SK-N-SH (cell line): ENCODE measurements at regions of chr10 and their contacts with region 1.

Region 1: DNA sequence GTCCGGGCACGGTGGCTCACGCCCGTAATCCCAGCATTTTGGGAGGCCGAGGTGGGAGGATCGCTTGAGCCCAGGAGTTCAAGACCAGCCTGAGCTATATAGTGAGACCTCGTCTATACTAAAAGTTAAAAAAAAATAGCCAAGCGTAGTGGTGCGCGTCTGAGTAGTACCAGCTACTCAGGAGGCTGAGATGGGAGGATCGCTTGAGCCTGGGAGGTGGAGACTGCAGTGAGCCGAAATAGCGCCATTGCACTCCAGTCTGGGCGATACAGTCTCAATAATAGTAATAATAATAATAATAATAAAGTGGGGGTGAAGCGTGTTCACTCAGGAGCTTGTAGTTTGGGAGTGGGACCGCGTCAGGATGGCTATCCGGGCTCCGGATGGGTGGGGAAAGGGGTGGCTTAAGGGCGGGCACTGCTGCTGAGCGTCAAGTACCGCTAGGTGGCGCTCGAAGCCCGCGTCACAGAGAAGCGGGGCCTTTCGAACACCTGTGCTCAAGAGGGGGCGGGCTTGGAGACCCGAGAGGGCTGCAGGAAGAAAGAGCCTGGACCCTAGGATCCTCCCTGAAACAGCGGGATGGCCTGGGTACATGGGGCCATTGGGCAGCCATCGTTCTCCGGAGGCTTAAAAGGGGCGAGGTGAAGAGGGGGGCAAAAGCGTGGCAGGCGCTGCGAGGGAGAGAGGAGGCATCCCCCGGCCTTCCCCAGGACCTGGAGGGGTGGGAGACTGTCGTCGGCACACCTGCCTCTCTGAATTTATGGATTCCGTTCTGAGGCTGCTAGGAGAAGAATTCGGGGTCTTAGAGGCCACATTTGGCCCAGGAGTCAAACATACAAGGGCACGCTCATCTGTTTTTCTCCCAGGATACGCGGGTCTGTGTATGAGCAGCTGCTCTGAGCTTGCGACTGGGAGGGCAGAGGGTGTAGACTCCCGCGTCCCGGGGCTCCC is 14.5 kb downstream of the LBX1 start:
- DNase-seq: peak; percentile 84
- H3K4me3 ChIP-seq: peak overlapping the region; percentile 19 to 67; a peak in 3 of 4 replicates
- H3K27ac ChIP-seq: no peak overlapping the region
- H3K4me1 ChIP-seq: peaks cover 0 to 35% of the 10 kb centered on the region in 2 experiments; a peak in 2 of 4 replicates
- H3K27me3 ChIP-seq: peaks cover 86% of the 10 kb centered on the region
- CTCF ChIP-seq: peak; percentile 93
- EP300 ChIP-seq: no peak
- RAD21 ChIP-seq: peak; percentile 77

Region 2: GRCh38 chr10:100890673-100891317 is 323.9 kb before region 1 on chr10:
- CTCF ChIA-PET with region 1: no interaction called
- POLR2A ChIA-PET with region 1: no interaction called
- DNase-seq: no peak
- H3K4me3 ChIP-seq: no peak overlapping the region
- H3K27ac ChIP-seq: peak overlapping the region; percentile 56 to 85; a peak in 3 of 4 replicates
- H3K4me1 ChIP-seq: peaks cover 0 to 11% of the 10 kb centered on the region in 2 experiments; a peak in 3 of 4 replicates
- H3K27me3 ChIP-seq: no peaks in the 10 kb centered on the region
- CTCF ChIP-seq: no peak
- EP300 ChIP-seq: peak; percentile 59 to 86; a peak in 3 of 4 replicates
- RAD21 ChIP-seq: no peak

Region 3: DNA sequence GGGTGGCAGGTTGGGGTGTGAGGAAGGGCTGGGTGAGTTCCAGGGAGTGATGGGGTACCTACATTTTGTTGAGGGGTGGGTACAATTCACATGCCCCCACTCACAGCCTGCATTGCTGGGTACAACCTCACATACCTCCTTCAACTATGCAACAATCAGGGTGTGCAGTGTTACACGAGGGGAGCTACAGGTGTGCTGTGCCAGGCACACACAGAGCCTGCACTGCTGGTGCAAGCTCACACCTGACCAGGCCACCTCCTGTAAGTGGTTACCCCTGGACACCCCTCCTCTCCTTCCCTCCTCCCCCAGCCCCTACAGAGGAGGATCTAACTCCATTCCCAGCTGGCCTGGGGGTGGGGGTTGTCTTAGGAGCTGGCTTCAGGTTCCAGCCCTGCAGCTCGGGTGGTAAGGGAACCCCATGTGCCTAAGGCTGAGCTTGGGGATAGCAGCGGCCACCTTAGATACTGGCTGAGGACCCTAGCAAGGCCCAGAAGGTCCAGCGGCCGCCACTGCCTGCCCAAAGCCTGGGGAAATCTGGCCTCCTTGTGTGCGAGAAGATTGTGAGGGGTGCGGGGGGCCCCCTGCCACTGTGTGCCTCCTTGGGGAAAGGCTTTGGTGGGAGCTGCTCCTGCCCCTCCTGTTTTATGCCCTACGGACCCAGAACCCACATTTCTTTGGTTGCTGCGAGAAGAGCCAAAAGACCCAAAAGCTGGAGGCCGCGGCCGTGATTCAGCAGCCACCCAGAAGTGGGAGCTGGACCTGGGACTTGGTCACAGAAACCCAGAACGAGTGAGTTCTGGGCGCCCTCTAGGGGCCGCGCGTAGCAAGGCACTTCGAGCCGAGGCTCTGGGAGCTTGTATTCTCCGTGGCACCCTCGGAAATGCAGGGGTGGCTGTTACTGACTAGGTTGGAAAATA is 72.8 kb before region 1 on chr10:
- CTCF ChIA-PET with region 1: interaction called, 15 read pairs
- POLR2A ChIA-PET with region 1: no interaction called
- DNase-seq: peak; percentile 92
- H3K4me3 ChIP-seq: peak overlapping the region in 1 of 2 experiments; percentile 41; a peak in 1 of 4 replicates
- H3K27ac ChIP-seq: no peak overlapping the region
- H3K4me1 ChIP-seq: peaks cover 0 to 3% of the 10 kb centered on the region in 2 experiments; a peak in 1 of 4 replicates
- H3K27me3 ChIP-seq: peaks cover 26% of the 10 kb centered on the region
- CTCF ChIP-seq: peak; percentile 98
- EP300 ChIP-seq: no peak
- RAD21 ChIP-seq: peak; percentile 95

Region 4: GRCh38 chr10:101228153-101228973 is 13.6 kb after region 1 on chr10:
- CTCF ChIA-PET with region 1: interaction called, 128 read pairs
- POLR2A ChIA-PET with region 1: no interaction called
- DNase-seq: peak; percentile 76
- H3K4me3 ChIP-seq: no peak overlapping the region; a peak in 1 of 4 replicates
- H3K27ac ChIP-seq: no peak overlapping the region
- H3K4me1 ChIP-seq: peaks cover 0 to 8% of the 10 kb centered on the region in 2 experiments; a peak in 1 of 4 replicates
- H3K27me3 ChIP-seq: peaks cover 96% of the 10 kb centered on the region
- CTCF ChIP-seq: 0 out of 2 replicates have a peak, but pooled peaks have one; percentile 10
- EP300 ChIP-seq: no peak
- RAD21 ChIP-seq: no peak

Region 5: DNA sequence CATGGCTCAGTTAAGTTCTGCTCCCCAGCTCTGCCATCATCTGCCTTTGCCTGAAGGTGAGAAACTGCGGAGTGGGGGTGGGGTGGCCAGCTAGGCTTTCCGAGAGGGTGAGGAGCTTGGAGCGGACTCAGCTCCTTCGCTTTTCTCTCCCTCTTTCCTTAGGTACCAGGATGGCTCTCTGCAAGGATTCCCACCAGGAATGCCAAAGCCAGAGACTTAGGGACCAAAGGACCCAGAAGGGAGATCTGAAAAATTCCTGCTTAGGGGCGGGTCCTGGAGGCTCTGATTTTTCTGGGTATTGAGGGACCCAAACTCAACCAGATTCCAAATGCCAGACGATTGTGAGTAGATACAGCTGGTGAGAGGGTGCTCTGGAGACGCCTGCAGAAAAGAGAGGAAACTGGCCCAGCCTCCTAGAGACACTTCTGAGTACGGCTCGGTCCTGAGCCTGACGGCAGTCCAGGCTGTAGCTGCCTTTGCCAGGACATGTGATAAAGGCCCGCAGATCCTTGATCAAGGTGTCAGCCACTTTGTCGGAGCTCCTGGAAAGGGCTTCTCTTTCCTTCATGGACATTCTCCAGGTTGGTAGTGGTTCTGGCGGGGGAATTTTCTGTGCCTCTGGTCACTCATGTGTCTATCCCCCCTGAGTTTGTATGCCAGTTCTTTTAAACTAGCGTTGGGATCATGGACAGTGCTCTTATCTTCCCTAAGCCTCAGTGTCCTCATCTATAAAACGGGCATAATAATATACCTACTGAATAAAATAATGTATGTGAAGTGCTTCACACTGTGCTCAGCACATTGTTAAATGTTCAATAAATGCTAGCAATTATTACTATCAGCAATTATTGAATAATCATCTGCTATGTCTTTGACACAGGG is 96.7 kb after region 1 on chr10:
- CTCF ChIA-PET with region 1: interaction called, 11 read pairs
- POLR2A ChIA-PET with region 1: no interaction called
- DNase-seq: peak; percentile 49
- H3K4me3 ChIP-seq: no peak overlapping the region
- H3K27ac ChIP-seq: peak overlapping the region in 1 of 2 experiments; percentile 32; a peak in 1 of 4 replicates
- H3K4me1 ChIP-seq: peaks cover 0 to 12% of the 10 kb centered on the region in 2 experiments; a peak in 1 of 4 replicates
- H3K27me3 ChIP-seq: peaks cover 3% of the 10 kb centered on the region; the same call in 1 of the 2 replicates
- CTCF ChIP-seq: no peak
- EP300 ChIP-seq: no peak
- RAD21 ChIP-seq: no peak

Region 6: GRCh38 chr10:101323495-101323894 is 108.8 kb after region 1 on chr10:
- CTCF ChIA-PET with region 1: no interaction called
- POLR2A ChIA-PET with region 1: no interaction called
- DNase-seq: no peak
- H3K4me3 ChIP-seq: no peak overlapping the region
- H3K27ac ChIP-seq: no peak overlapping the region
- H3K4me1 ChIP-seq: peaks cover 0 to 14% of the 10 kb centered on the region in 2 experiments; a peak in 1 of 4 replicates
- H3K27me3 ChIP-seq: no peaks in the 10 kb centered on the region; the same call in 1 of the 2 replicates
- CTCF ChIP-seq: no peak
- EP300 ChIP-seq: no peak
- RAD21 ChIP-seq: no peak

Region 7: DNA sequence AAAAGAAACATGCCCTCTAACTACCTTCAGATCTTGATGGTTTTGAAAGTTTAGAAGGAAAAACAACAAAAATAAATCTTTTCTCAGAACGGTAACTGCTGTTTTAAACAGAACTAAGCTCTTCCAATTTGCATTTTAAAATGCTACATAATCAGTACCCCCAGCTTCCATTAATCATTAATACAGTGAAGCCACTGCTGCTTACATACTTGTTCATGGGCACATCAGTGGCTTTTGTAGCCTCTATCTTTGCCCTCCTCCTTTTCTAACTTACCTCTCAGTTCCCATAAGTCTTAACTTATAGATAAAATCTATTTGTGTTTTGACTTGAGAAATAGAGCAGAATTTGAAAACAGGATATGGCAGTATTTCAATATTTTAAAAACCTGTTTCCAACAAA is 264.2 kb after region 1 on chr10:
- CTCF ChIA-PET with region 1: interaction called, 14 read pairs
- POLR2A ChIA-PET with region 1: no interaction called
- DNase-seq: no peak
- H3K4me3 ChIP-seq: no peak overlapping the region
- H3K27ac ChIP-seq: no peak overlapping the region
- H3K4me1 ChIP-seq: no peaks in the 10 kb centered on the region; a peak in 1 of 4 replicates
- H3K27me3 ChIP-seq: no peaks in the 10 kb centered on the region
- CTCF ChIP-seq: no peak
- EP300 ChIP-seq: no peak
- RAD21 ChIP-seq: no peak

Region 8: DNA sequence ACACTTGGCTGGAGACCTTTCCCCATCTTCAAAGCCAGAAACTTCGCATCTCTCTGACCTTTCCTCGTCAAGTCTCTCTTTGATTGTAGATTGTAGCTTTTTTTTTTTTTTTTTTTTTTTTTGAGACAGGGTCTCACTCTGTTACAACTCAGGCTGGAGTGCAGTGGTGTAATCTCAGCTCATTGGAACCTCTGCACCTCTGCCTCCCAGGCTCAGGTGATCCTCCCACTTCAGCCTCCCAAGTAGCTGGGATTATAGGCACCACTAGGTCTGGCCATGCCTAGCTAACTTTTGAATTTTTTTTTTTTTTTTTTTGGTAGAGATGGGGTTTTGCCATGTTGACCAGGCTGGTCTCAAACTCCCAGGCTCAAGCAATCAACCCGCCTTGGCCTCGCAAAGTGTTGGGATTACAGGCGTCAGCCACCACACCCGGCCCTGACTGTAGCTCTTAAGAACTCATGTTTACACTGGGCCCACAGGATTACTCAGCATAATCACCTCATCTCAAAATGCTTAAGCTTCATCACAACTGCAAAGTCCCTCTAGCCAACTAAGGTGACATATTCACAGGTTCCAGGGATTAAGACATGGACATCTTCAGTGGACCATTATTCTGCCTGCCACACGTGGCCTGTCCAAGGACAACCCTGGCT is 361.6 kb after region 1 on chr10:
- CTCF ChIA-PET with region 1: interaction called, 164 read pairs
- POLR2A ChIA-PET with region 1: interaction called, 7 read pairs
- DNase-seq: no peak
- H3K4me3 ChIP-seq: no peak overlapping the region
- H3K27ac ChIP-seq: no peak overlapping the region
- H3K4me1 ChIP-seq: no peaks in the 10 kb centered on the region; a peak in 1 of 4 replicates
- H3K27me3 ChIP-seq: no peaks in the 10 kb centered on the region
- CTCF ChIP-seq: no peak
- EP300 ChIP-seq: no peak
- RAD21 ChIP-seq: no peak